Heart left ventricle (tissue), 16 donors: ENCODE measurements at regions of chr11 and their contacts with region 1.

Region 1: DNA sequence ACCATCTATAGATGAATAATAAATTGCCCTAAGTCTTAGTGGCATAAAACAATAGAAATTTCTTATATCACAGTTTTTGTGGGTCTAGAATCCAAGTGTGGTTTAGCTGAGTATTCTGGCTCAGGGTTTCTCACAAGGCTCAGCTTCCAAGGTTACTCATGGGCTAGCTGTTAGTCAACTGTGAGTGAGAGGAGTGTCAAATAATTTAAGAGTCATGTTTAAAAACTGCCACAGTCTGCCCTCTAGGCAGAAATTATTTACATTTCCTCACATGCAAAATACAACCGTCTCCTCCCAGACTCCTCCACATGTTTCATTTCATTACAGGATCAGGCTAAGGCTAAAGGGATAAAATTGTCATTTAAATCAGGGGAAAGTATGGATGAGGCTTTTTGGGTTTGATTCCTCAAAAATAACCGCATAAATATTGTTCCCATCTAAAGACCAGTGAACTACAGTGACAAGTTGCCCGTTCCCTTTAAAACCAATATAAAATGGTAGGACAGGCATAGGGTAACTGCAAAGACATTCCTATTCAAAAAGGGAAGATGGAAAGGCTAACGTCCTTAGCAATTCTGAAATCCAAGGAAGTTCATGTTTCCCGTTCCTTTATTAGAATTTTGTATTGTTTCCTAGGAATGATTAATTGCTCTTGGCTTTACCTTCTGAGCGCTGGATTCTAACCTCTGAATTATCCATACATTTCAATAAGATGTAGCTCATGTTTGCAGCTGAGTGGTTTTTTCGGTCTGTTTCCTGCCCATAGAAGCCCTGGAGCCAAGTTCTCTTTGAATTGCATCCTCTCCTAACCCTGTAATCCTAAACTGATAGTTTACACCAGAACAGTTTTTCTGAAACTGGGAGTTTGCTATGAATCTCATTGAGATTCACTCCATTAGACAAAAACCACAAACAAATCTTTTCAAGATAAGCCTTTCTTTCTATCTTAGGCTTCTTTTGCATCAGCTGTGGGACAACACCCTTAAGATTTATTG is 324.5 kb downstream of the DYNC2H1 start:
- DNase-seq: no peak
- ATAC-seq: no peak
- H3K4me3 ChIP-seq: no peak overlapping the region
- H3K27ac ChIP-seq: no peak overlapping the region
- H3K4me1 ChIP-seq: no peaks in the 10 kb centered on the region
- H3K27me3 ChIP-seq: no peaks in the 10 kb centered on the region
- CTCF ChIP-seq: no peak
- POLR2A ChIP-seq: no peak

Region 2: GRCh38 chr11:103344886-103345285 is 88.8 kb before region 1 on chr11:
- intact Hi-C with region 1: loop called in 1 of 10 experiments (anchors 10 kb)
- DNase-seq: no peak
- ATAC-seq: no peak
- H3K4me3 ChIP-seq: no peak overlapping the region
- H3K27ac ChIP-seq: no peak overlapping the region
- H3K4me1 ChIP-seq: no peaks in the 10 kb centered on the region
- H3K27me3 ChIP-seq: no peaks in the 10 kb centered on the region
- CTCF ChIP-seq: no peak
- POLR2A ChIP-seq: no peak